Posterior vena cava (tissue), 2 donors: ENCODE measurements at regions of chr3 and their contacts with region 1.

Region 1: GRCh38 chr3:100407977-100408532 is 6.7 kb downstream of the LNP1 start:
- DNase-seq: no peak

Region 2: GRCh38 chr3:100263583-100263982 is 144.5 kb before region 1 on chr3:
- intact Hi-C with region 1: no loop called
- DNase-seq: no peak

Region 3: DNA sequence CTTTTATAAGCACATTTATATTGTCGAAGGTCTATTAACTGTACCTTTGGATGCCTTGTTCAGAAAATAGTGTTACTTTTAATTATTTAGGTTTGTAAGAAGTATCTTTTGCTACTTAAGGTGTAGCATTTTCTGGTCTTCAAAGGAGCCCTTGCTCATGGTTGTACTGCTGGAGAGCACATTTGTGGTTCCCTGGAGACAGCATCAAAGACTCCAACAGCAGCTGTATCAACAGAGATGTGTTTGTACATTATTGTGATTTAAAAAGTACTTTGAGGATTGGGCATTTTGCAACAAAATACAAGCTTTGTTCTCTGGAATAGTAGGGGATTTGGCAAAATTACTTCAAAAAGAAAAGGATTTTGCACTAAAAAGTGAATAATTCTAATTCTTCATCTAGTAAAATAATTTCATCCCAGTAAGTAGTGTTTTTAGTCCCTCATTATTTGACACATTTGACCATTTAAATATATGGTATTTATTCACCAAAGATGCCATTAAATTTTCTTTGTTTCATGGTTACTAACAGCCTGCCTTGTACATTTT is 130.7 kb before region 1 on chr3:
- intact Hi-C with region 1: loop called in 1 of 2 experiments (anchors 2 kb)
- DNase-seq: no peak

Region 4: DNA sequence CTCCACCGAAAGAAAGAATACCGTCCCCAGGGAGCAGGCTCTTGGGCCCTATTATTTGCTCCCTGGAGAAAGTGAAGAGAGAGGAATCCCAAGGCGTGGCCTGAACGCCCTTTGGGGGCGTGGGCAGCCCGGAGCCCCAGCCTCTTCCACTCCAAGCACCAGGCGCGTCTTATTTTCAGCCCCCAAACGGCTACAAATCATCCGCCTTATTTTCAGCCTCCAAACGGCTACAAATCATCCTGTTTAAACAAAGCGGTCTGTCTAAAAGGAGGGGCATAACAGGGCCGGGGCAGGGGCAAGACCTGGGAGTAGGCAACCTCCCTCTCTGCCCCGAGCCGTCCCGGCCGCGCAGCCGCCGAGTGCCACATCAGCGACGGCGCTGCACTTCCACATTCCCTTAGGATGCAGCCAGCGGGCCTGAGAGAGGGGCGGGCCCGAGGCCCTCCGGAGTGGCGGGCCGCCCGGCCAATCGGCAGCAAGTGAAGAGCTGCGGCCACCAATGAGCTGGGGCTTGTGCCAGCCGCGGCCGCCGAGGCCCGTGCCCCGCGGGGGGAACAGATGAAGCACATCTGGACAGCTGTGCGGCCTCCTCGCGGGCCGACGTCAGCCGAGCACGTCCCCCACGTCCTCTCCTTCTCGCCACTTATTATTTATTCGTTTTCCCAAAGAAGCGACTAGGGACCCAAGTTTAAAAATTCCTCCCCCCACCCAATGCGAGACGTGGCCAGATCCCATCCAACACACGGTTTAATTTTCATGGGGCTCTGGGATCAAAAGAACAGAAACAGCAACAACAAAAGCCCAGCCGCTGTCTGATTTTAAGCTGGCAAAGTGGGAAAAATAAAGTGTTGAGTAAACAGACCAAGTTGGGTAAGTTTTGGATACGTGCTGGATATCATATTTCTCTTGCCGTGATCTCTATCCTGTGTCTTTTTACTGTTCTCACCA is 84.3 kb after region 1 on chr3 and contains the start of gene TMEM45A:
- intact Hi-C with region 1: no loop called
- DNase-seq: peak; percentile 99
- total RNA-seq, gene TMEM45A: 34.5 to 75.3 TPM